Aorta (tissue), 5 donors: ENCODE measurements at regions of chr10 and their contacts with region 1.

Region 1: DNA sequence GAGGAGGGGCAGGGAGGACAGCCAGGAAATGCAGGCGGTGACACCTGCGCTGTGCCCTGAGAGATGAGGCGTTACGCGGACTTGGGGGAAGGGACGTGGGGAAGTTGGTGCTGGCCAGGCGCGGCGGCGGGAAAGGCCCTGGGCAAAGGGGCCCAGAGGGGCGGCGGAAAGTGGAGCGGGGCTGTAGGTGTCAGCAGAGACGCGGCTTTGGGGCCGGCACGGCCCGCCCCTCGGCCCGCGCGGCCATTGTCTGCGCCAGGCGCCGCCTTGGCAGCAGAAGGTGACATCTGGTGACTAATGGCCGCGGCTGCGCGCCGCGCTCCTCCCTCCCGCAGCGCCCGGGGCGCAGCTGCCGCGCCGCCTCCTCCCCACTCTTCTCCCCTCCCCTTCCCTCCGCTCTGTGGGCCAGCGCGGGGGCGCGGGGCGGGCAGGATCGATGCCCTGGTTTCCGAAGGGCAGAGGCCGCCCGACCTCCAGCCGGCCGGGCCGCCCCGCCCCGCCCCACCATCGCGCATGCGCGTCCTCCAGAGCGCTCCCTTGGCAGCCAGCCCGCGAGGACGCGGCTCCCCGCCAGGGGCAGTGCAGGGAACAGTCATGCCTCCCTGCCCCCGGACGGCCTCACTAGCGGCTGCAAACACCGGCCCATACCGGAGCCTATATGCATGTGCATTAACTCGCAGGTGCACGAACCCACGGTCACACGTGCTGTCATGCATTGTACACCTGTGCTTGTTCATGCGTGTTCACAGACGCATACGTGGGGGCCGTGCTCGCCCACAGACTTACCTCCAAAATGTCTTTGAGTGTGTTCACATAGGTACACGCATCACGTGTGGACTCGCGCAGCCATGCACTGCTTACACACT is 269.6 kb downstream of the RPS24 start:
- DNase-seq: peak; percentile 97 to 99
- ATAC-seq: peak; percentile 97
- H3K4me3 ChIP-seq: peak overlapping the region; percentile 4 to 45
- H3K27ac ChIP-seq: peak overlapping the region in 1 of 2 donors; percentile 62
- H3K4me1 ChIP-seq: no peaks in the 10 kb centered on the region
- H3K27me3 ChIP-seq: no peaks in the 10 kb centered on the region

Region 2: DNA sequence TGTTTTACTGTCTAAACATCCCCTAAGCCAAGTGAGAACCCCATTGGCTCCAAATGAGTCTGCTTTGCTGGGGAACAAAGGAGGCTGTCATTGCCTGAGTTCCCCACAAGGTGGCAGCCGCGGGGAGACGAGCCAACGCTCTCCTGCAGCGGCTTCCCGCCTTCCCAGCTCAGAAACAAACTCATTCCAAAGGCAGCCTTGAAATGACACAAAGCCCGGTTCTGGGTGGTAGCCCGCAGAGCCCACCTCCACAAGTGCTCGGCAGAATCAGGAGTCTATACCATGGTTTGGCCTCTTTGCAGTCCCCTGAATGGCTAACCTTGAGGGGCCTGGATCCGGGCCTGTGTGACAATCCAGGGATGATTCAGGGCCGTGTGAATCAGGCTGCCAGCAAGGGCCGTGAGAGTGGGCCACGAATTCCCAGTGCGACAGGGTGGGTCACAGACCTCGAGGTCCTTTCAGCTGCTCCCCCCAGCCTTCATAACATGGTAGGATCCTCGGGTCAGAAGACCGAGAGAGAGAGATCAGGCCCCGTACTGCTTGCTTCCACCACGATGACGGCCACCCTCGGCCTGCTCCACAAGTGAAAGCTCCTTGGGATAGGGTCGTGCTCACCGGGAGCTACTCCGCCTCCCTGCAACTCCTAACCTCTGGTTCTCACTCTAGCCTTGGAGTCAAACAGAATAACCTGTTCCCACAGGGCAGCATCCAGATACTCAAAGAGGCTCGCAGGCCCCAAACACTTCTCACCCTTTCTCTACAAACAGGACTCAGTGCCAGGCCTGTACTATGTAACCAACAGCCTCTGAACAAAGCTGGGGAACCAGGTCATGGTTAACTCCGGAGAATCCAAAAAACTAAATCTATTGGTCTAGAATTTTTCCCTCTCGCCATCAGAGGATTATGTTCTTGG is 456.2 kb before region 1 on chr10:
- intact Hi-C with region 1: no loop called
- DNase-seq: peak; percentile 76 to 92
- ATAC-seq: peak; percentile 85
- H3K4me3 ChIP-seq: no peak overlapping the region
- H3K27ac ChIP-seq: peak overlapping the region in 1 of 2 donors; percentile 2
- H3K4me1 ChIP-seq: no peaks in the 10 kb centered on the region
- H3K27me3 ChIP-seq: no peaks in the 10 kb centered on the region

Region 3: GRCh38 chr10:78194539-78195402 is 108.5 kb before region 1 on chr10:
- intact Hi-C with region 1: no loop called
- DNase-seq: no peak
- ATAC-seq: no peak
- H3K4me3 ChIP-seq: no peak overlapping the region
- H3K27ac ChIP-seq: no peak overlapping the region
- H3K4me1 ChIP-seq: no peaks in the 10 kb centered on the region
- H3K27me3 ChIP-seq: no peaks in the 10 kb centered on the region

Region 4: GRCh38 chr10:78211561-78212051 is 91.6 kb before region 1 on chr10:
- intact Hi-C with region 1: loop called (anchors 5 kb)
- DNase-seq: peak in 1 of 2 donors; percentile 65
- ATAC-seq: no peak
- H3K4me3 ChIP-seq: no peak overlapping the region
- H3K27ac ChIP-seq: no peak overlapping the region
- H3K4me1 ChIP-seq: no peaks in the 10 kb centered on the region
- H3K27me3 ChIP-seq: no peaks in the 10 kb centered on the region

Region 5: GRCh38 chr10:78407009-78407711 is 103.9 kb after region 1 on chr10:
- intact Hi-C with region 1: loop called in 1 of 2 experiments (anchors 5 kb)
- DNase-seq: peak; percentile 87 to 90
- ATAC-seq: peak; percentile 23
- H3K4me3 ChIP-seq: no peak overlapping the region
- H3K27ac ChIP-seq: no peak overlapping the region
- H3K4me1 ChIP-seq: peaks cover 0 to 3% of the 10 kb centered on the region in 2 donors
- H3K27me3 ChIP-seq: no peaks in the 10 kb centered on the region

Region 6: GRCh38 chr10:78420946-78421735 is 117.9 kb after region 1 on chr10:
- intact Hi-C with region 1: no loop called
- DNase-seq: no peak
- ATAC-seq: no peak
- H3K4me3 ChIP-seq: no peak overlapping the region
- H3K27ac ChIP-seq: no peak overlapping the region
- H3K4me1 ChIP-seq: no peaks in the 10 kb centered on the region
- H3K27me3 ChIP-seq: no peaks in the 10 kb centered on the region

Region 7: DNA sequence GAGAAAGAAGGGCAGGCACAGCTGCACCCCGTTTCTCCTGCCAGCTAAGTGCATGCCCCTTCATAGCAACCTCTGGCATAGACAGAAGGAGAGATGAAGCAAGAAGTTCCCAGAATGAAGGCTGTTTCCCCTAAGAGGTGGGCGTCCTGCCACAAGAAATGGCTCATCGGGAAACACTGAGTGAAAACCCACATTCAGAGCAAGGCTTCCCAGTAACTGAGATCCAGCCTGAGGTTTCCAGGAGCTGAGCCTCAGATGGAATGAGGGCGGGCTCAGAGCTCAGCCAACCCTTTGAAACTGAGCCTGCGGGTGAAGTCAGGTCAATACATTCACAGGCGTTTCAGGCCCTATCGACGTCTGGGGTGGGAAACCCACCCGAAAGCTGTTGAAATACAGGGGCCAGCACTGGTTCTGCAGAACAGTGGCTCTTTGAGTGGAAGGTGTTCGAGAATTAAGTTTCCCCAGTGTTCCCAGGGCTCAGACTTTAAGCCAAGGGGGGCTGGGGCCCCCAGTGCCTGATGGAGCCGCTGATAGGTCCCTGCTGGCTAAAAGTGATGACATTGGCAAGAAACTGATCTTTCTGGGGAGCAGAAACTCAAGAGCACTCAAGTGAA is 240.6 kb after region 1 on chr10:
- intact Hi-C with region 1: loop called in 1 of 2 experiments (anchors 10 kb)
- DNase-seq: peak; percentile 89
- ATAC-seq: peak; percentile 88
- H3K4me3 ChIP-seq: no peak overlapping the region
- H3K27ac ChIP-seq: peak overlapping the region in 1 of 2 donors; percentile 20
- H3K4me1 ChIP-seq: peaks cover 0 to 3% of the 10 kb centered on the region in 2 donors
- H3K27me3 ChIP-seq: no peaks in the 10 kb centered on the region